AG04450 (cell line): ENCODE measurements at regions of chr14 and their contacts with region 1.

Region 1: DNA sequence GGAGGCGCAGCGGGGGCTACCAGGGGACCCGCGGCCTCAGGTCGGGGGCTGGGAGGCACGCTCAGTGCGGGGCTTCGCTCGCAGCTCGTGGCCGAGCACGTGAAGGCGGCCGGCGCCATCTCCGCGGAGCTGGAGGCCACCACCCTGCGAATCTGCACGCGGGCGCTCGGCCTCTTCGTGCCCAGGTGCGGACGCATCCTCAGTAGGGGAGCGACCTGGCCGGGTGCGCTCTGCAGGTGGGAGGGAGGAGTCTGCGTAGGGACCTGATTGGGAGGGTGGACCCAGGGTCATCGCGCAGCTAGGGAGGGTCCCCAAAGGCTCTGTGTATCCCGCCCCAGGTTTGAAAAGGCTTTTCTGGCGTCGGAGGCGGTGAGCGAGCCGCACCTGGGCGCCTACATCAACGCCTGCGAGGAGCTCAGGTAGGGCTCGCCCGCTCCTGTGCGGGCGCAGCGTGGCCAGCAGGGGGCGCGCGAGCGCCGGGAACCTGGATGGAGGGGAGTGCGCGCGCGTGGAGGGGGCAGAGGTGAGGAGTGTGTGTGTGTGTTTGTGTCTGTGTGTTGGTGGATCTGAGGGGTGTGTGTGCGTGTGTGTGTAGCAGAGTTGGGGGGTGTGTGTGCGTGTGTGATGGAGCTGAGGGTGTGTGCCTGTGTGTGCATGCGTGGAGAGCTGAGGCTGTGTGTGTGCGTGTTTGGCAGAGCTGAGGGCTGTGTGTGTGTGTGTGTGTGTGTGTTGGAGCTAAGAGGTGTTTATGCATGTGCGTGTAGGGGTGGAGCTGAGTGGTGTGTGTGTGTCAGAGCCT is 10.3 kb downstream of the EXOC3L4 start:
- DNase-seq: no peak
- H3K4me3 ChIP-seq: no peak overlapping the region
- H3K27ac ChIP-seq: no peak overlapping the region
- H3K27me3 ChIP-seq: peaks cover 32% of the 10 kb centered on the region
- CTCF ChIP-seq: peak; percentile 94

Region 2: DNA sequence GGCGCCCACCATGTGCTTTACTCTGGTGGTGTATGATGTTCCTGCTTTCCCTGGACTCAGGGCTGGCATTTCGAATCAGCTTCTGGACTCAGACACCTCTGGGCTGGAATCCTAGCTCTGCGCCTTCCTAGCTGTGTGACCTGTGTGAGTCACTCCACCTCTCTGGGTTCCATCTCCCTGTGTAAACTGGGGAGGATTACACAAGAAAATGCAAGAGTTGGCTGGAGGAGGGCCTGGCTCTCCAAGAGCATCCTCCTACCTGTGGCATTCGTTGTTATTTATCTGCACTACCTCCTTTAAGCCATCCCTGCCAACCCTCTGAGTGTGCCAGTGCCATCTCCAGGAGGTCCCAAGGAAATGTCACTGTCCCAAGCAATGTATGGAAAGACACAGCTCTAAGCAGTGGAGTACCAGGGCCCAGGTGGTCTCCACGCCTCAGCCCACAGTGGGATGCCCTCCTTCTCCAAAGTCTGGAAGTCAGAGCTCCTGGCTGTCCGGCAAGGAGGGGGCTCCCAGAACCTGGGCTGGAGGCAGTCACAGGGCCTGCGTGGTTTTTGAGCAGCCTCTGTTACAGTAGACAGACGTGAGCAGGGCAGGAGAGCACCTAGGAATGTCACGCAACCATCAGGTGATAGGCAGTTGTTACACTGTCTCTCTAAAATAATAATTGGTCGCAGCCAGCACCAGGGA is 11.2 kb after region 1 on chr14:
- CTCF ChIA-PET with region 1: interaction called, 15 read pairs
- POLR2A ChIA-PET with region 1: no interaction called
- DNase-seq: no peak
- H3K4me3 ChIP-seq: no peak overlapping the region
- H3K27ac ChIP-seq: no peak overlapping the region
- H3K27me3 ChIP-seq: no peaks in the 10 kb centered on the region
- CTCF ChIP-seq: no peak

Region 3: DNA sequence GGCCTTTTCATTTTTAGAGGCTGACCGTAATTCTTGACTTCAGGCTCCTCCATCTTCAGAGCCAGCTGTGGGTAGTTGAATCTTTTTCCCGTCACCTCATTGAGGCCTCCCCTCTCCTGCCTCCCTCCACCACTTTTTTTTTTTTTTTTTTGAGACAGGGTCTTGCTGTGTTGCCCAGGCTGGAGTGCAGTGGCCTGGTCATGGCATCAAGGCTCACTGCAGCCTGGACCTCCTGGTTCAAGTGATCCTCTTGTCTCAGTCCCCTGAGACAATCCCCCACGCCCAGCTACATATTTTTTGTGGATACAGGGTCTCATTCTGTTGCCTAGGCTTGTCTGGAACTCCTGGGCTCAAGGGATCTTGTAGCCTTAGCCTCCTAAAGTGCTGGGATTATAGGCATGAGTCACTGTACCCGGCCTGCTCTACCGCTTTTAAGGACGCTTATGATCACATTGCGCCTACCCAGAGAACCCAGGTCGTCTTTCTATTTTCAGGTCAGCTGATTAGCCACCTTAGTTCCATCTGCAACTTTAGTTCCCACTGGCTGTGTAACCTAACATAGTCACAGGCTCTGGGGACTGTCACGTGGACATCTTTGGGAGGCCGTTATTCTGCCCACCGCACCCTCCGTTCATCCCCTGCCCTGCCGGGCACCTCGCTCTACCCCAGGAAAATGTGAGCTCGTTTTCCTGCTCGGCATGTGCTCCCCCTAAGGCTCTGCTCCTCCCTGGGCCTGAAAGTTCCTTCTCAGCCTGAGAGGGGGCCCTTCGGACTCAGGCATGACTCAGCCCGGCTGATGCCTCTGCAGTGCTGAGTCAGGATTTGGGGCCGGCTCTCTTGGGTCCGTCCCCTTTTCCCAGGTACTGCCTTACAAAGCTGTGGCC is 31.8 kb after region 1 on chr14:
- CTCF ChIA-PET with region 1: interaction called, 18 read pairs
- POLR2A ChIA-PET with region 1: no interaction called
- DNase-seq: no peak
- H3K4me3 ChIP-seq: no peak overlapping the region
- H3K27ac ChIP-seq: peak overlapping the region; percentile 52
- H3K27me3 ChIP-seq: no peaks in the 10 kb centered on the region
- CTCF ChIP-seq: no peak

Region 4: DNA sequence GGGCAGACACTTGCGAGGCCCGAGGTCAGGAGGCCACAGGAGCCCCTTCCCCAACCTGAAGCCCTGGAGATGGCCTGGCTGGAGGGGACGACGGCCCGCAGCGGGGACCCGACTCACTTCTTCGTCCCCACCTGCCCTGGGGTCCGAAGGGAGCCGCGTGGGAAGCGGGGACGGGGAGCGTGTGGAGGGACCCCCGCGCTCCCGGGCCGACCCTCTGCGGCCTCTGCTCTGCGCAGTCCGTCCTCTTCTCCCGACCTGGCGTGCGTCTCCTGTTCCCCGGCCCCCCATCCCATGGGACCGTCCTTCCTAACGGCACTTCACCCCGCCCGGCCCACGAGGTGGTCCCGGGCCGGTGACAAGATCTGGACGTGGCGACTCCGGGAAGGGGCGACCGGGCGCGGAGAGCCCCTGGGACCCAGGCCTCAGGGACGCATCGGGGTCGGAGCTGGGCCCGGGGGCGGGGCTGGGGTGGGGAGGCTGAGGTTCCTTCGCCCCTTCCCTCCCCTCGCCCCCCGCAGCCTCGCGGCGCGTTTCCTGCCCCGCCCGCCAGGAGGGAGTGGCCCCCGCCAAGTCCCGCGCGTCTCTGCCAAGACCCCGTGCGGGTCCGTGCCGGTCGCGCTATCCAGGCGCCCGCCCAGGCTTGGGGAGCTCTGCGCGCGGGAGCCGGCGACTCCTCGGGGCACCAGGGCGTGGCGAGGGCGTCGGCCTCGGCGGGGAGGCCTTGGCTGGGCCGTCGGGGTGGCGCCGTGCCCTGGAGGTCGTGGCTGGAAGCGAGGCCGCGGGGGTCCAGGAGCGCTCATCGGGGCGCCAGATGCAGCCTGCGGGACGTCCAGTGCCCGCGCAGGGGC is 115.5 kb after region 1 on chr14:
- CTCF ChIA-PET with region 1: no interaction called
- POLR2A ChIA-PET with region 1: no interaction called
- DNase-seq: no peak
- H3K4me3 ChIP-seq: no peak overlapping the region
- H3K27ac ChIP-seq: no peak overlapping the region
- H3K27me3 ChIP-seq: peaks cover 73% of the 10 kb centered on the region
- CTCF ChIP-seq: no peak

Region 5: GRCh38 chr14:103281496-103282231 is 176.8 kb after region 1 on chr14:
- CTCF ChIA-PET with region 1: interaction called, 49 read pairs
- POLR2A ChIA-PET with region 1: no interaction called
- DNase-seq: no peak
- H3K4me3 ChIP-seq: no peak overlapping the region
- H3K27ac ChIP-seq: no peak overlapping the region
- H3K27me3 ChIP-seq: peaks cover 36% of the 10 kb centered on the region
- CTCF ChIP-seq: peak; percentile 66

Region 6: GRCh38 chr14:103380719-103381377 is 276.0 kb after region 1 on chr14:
- CTCF ChIA-PET with region 1: no interaction called
- POLR2A ChIA-PET with region 1: no interaction called
- DNase-seq: no peak
- H3K4me3 ChIP-seq: no peak overlapping the region
- H3K27ac ChIP-seq: no peak overlapping the region
- H3K27me3 ChIP-seq: no peaks in the 10 kb centered on the region
- CTCF ChIP-seq: no peak